Naive thymus-derived CD4-positive, alpha-beta T cell (primary cell): ENCODE measurements at regions of chr12 and their contacts with region 1.

Region 1: DNA sequence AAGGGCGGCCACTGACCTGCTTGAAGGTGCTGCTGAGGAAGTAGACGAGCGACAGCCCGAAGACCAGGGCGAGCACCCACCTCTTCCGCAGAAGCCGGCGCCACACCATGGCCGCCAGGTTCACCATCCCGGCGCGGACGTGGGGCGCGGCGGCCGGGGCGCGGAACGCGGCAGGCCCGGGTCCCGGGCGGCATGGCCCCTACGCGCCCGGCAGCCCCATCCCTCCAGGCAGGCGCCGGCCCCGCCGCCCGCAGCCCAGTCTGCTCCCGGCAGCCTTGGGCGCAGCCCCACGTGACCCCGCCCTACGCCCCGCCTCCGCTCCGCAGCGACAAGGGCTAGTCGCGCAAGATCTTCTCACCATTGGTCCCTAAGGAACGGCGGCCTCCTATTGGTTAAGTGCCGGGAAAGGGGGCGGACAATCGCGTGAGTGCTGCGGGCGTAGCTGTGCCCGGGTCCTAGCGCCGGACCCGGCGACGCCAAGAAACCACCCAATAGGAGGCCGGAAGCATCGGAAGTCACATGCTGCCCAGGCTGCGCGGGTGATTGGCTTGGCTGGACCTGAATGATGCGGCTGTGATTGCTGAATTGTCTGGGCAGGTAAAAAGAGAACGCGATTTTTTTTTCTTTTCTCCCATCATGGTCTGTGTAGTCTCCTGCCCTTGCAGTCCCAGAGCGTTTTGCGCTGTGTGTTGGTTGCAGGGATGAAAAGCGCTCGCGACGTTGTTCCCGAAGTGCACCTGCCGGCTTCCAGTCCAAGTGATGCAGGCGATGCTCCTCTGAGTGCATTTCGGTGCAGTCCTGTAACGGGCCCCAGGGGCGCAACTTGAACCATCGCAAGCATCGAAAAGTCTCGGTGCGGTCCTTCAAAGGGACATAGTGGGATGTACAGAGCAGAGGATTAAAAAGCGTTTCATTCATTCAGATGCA is at the starts of genes RNFT2 and SPRING1:
- DNase-seq: peak; percentile 94 to 99 (median 99)
- ATAC-seq: peak; percentile 99
- H3K4me3 ChIP-seq: peak within 1 kb of the TSS; percentile 82
- H3K4me3 Mint-ChIP-seq: peak within 1 kb of the TSS; percentile 94 to 100 (median 96)
- H3K27ac ChIP-seq: peak within 1 kb of the TSS; percentile 75
- H3K27ac Mint-ChIP-seq: peak within 1 kb of the TSS; percentile 75 to 92 (median 88)
- H3K4me1 ChIP-seq: peaks cover 4 to 12% of the 10 kb centered on the region in 2 donors
- H3K4me1 Mint-ChIP-seq: peaks cover 18 to 43% (median 36%) of the 10 kb centered on the region in 7 donors
- H3K27me3 ChIP-seq: no peaks in the 10 kb centered on the region
- H3K27me3 Mint-ChIP-seq: no peaks in the 10 kb centered on the region
- total RNA-seq, gene RNFT2: 5.4 to 8.3 (median 7.4) TPM
- total RNA-seq, gene SPRING1: 12.1 to 29.5 (median 25.4) TPM

Region 2: DNA sequence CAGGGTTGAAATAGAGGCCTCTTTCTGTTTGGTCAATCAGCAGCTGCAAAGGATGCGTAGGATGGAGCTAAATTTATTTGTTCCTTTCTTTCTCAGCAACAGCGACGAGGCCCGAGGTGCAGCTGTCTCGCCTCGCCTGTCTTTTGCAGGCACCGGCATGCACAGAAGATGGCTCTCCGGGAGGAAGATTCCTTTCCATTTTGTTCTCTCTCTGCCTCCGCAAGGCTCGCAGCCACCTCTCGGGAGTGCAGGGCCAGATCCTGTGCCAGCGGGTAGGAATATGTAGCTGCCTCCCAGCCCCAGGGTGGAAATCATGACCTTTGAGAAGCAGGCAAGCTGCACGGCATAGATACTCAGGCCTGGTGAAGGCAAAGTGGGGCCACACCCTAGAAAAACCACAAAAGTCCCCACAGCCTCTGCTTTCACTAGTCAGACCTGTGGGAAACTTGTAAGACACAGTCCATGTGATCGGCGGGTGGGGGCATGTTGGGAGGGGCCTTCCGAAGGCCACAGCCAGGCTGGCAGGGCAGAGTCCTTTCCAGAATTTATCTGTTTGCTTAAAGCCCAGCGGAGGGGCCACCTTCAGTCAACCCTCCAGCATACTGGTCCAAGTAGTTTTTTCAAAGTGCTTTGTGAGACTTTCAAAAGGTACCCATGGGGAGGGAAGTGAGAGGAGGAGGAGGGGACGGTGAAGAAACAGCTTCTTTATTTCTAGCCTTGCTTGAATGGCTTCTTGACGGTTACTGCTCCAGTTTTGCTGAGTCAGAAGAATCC is 178.7 kb before region 1 on chr12 and contains the start of gene MAP1LC3B2:
- CTCF ChIA-PET with region 1: no interaction called
- POLR2A ChIA-PET with region 1: no interaction called
- intact Hi-C with region 1: loop called in 1 of 2 experiments (anchors 1 kb)
- DNase-seq: peak; percentile 53 to 85 (median 77)
- ATAC-seq: peak; percentile 92
- H3K4me3 ChIP-seq: peak within 1 kb of the TSS; percentile 54
- H3K4me3 Mint-ChIP-seq: peak within 1 kb of the TSS; percentile 70 to 90 (median 86)
- H3K27ac ChIP-seq: peak within 1 kb of the TSS; percentile 49
- H3K27ac Mint-ChIP-seq: peak within 1 kb of the TSS; percentile 88 to 99 (median 96)
- H3K4me1 ChIP-seq: peaks cover 29% of the 10 kb centered on the region in 2 donors
- H3K4me1 Mint-ChIP-seq: peaks cover 24 to 54% (median 48%) of the 10 kb centered on the region in 7 donors
- H3K27me3 ChIP-seq: no peaks in the 10 kb centered on the region
- H3K27me3 Mint-ChIP-seq: peaks cover 0 to 6% (median 0%) of the 10 kb centered on the region in 5 donors
- total RNA-seq, gene MAP1LC3B2: 0.48 to 6.6 (median 1.5) TPM

Region 3: DNA sequence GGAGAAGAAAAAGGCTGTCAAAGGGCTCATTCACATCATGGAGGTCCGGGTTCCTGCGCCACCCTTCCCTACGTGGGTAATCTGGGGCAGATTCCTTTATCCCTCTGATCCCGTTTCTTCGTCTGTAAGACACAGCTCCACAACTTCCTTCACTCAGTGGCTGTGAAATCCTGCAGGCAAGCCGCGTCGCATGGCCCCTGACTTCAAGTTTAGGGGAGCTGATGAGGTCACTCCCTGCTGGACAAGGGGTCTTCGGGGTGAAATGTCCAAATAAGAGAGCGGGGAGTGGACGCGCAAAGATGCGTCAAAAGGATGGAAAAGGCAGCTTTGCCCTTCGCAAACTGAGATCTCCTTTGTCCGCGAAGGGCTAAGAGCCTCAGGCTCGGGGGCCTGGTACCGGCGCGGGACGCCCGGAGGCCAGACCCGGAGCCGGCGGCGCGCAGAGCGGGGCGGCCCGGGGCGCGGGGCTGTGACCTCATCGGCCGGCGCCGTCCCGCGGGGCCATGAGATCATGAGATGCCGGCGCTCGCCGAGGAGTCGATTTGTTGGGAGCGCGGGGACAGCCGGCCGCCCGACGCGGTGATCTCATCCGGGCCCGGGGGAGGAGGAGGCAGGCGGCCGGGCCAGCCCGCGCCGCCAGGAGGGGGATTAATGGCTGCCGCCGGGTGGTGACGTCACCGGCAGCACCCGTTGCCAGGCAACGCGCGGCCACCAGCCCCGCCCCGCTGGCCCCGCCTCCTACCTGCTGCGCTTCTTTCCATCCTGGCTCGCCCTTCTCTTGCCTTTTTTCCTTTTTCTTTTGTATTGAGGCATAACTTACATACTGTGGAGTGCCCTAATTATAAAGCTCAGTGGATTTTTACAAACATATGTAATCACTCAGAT is 81.2 kb after region 1 on chr12:
- CTCF ChIA-PET with region 1: no interaction called
- POLR2A ChIA-PET with region 1: no interaction called
- intact Hi-C with region 1: loop called (anchors 1 kb)
- DNase-seq: peak; percentile 86 to 94 (median 91)
- ATAC-seq: peak; percentile 90
- H3K4me3 ChIP-seq: peak overlapping the region; percentile 99
- H3K4me3 Mint-ChIP-seq: peak overlapping the region; percentile 78 to 99 (median 94)
- H3K27ac ChIP-seq: peak overlapping the region; percentile 97
- H3K27ac Mint-ChIP-seq: peak overlapping the region; percentile 87 to 99 (median 96)
- H3K4me1 ChIP-seq: peaks cover 7 to 11% of the 10 kb centered on the region in 2 donors
- H3K4me1 Mint-ChIP-seq: peaks cover 12 to 31% (median 24%) of the 10 kb centered on the region in 7 donors
- H3K27me3 ChIP-seq: no peaks in the 10 kb centered on the region
- H3K27me3 Mint-ChIP-seq: no peaks in the 10 kb centered on the region

Region 4: GRCh38 chr12:116924558-116925453 is 186.8 kb after region 1 on chr12:
- CTCF ChIA-PET with region 1: no interaction called
- POLR2A ChIA-PET with region 1: no interaction called
- intact Hi-C with region 1: loop called (anchors 1 to 5 kb)
- DNase-seq: peak in 8 of 9 donors; percentile 46 to 86 (median 80)
- ATAC-seq: peak; percentile 96
- H3K4me3 ChIP-seq: peak overlapping the region; percentile 21
- H3K4me3 Mint-ChIP-seq: peak overlapping the region; percentile 27 to 82 (median 77)
- H3K27ac ChIP-seq: no peak overlapping the region
- H3K27ac Mint-ChIP-seq: peak overlapping the region; percentile 40 to 82 (median 62)
- H3K4me1 ChIP-seq: peaks cover 26 to 59% of the 10 kb centered on the region in 2 donors
- H3K4me1 Mint-ChIP-seq: peaks cover 51 to 86% (median 70%) of the 10 kb centered on the region in 7 donors
- H3K27me3 ChIP-seq: no peaks in the 10 kb centered on the region
- H3K27me3 Mint-ChIP-seq: peaks cover 0 to 8% (median 0%) of the 10 kb centered on the region in 5 donors

Region 5: GRCh38 chr12:117134059-117134458 is 396.0 kb after region 1 on chr12:
- CTCF ChIA-PET with region 1: no interaction called
- POLR2A ChIA-PET with region 1: no interaction called
- intact Hi-C with region 1: loop called in 1 of 2 experiments (anchors 10 kb)
- DNase-seq: peak in 8 of 9 donors; percentile 26 to 60 (median 44)
- ATAC-seq: peak; percentile 85
- H3K4me3 ChIP-seq: no peak overlapping the region
- H3K4me3 Mint-ChIP-seq: peak overlapping the region in 9 of 10 donors; percentile 4 to 63 (median 44)
- H3K27ac ChIP-seq: no peak overlapping the region
- H3K27ac Mint-ChIP-seq: peak overlapping the region in 7 of 9 donors; percentile 4 to 83 (median 60)
- H3K4me1 ChIP-seq: peaks cover 6 to 11% of the 10 kb centered on the region in 2 donors
- H3K4me1 Mint-ChIP-seq: peaks cover 9 to 17% (median 11%) of the 10 kb centered on the region in 7 donors
- H3K27me3 ChIP-seq: no peaks in the 10 kb centered on the region
- H3K27me3 Mint-ChIP-seq: no peaks in the 10 kb centered on the region

Region 6: GRCh38 chr12:118016424-118017264 is 1278.6 kb after region 1 on chr12 and contains the start of gene RFC5:
- CTCF ChIA-PET with region 1: no interaction called
- POLR2A ChIA-PET with region 1: no interaction called
- intact Hi-C with region 1: loop called in 1 of 2 experiments (anchors 5 kb)
- DNase-seq: peak; percentile 93 to 98 (median 97)
- ATAC-seq: peak; percentile 99
- H3K4me3 ChIP-seq: peak within 1 kb of the TSS; percentile 80
- H3K4me3 Mint-ChIP-seq: peak within 1 kb of the TSS; percentile 89 to 95 (median 92)
- H3K27ac ChIP-seq: peak within 1 kb of the TSS; percentile 69
- H3K27ac Mint-ChIP-seq: peak within 1 kb of the TSS; percentile 82 to 95 (median 92)
- H3K4me1 ChIP-seq: peaks cover 10 to 13% of the 10 kb centered on the region in 2 donors
- H3K4me1 Mint-ChIP-seq: peaks cover 11 to 29% (median 18%) of the 10 kb centered on the region in 7 donors
- H3K27me3 ChIP-seq: no peaks in the 10 kb centered on the region
- H3K27me3 Mint-ChIP-seq: peaks cover 0 to 7% (median 0%) of the 10 kb centered on the region in 5 donors
- total RNA-seq, gene RFC5: 6.3 to 40.3 (median 15.6) TPM

Region 7: GRCh38 chr12:118135788-118136558 is 1397.9 kb after region 1 on chr12 and contains the start of gene PEBP1:
- CTCF ChIA-PET with region 1: no interaction called
- POLR2A ChIA-PET with region 1: no interaction called
- intact Hi-C with region 1: loop called in 1 of 2 experiments (anchors 10 kb)
- DNase-seq: peak; percentile 85 to 94 (median 89)
- ATAC-seq: peak; percentile 100
- H3K4me3 ChIP-seq: peak within 1 kb of the TSS; percentile 76
- H3K4me3 Mint-ChIP-seq: peak within 1 kb of the TSS; percentile 86 to 99 (median 97)
- H3K27ac ChIP-seq: peak within 1 kb of the TSS; percentile 83
- H3K27ac Mint-ChIP-seq: peak within 1 kb of the TSS; percentile 84 to 96 (median 91)
- H3K4me1 ChIP-seq: peaks cover 6 to 17% of the 10 kb centered on the region in 2 donors
- H3K4me1 Mint-ChIP-seq: peaks cover 7 to 46% (median 37%) of the 10 kb centered on the region in 7 donors
- H3K27me3 ChIP-seq: no peaks in the 10 kb centered on the region
- H3K27me3 Mint-ChIP-seq: no peaks in the 10 kb centered on the region
- total RNA-seq, gene PEBP1: 73.8 to 109 (median 91.1) TPM